ENCODE measurements at regions of chr22 and their contacts with region 1.

Region 1: DNA sequence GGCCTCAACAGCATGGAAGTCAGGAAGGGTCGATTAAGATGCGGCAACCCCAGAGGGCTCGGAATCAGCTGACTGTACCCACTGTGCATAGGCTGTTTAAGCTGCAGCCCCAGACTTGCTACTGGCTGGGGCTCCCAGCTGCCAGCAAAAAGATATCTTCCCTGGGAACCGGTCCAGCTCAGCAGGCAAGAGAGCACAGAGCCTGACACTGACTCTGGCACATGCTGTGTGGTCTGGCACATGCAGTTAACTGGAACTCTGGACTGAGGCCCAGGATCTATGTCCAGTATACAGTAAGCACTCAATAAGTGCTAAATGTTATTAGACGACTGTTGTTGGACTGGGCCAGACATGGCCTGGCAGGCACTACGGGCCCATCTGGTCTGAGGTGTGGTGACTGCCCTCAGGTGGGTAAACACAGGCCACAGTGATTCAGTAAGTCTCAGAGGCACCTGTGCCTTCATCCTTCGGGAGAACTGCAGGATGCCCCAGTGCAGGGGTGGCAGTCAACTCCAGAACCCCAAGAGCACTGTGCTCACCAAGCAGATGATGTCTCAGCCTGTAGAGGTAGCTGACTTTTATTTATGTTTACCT is 87.6 kb downstream of the LARGE1 start:
- DNase-seq: no peak
- ATAC-seq: no peak
- H3K4me3 ChIP-seq: no peak overlapping the region
- H3K27ac ChIP-seq: no peak overlapping the region
- H3K4me1 ChIP-seq: no peaks in the 10 kb centered on the region
- H3K27me3 ChIP-seq: no peaks in the 10 kb centered on the region
- CTCF ChIP-seq: no peak

Region 2: DNA sequence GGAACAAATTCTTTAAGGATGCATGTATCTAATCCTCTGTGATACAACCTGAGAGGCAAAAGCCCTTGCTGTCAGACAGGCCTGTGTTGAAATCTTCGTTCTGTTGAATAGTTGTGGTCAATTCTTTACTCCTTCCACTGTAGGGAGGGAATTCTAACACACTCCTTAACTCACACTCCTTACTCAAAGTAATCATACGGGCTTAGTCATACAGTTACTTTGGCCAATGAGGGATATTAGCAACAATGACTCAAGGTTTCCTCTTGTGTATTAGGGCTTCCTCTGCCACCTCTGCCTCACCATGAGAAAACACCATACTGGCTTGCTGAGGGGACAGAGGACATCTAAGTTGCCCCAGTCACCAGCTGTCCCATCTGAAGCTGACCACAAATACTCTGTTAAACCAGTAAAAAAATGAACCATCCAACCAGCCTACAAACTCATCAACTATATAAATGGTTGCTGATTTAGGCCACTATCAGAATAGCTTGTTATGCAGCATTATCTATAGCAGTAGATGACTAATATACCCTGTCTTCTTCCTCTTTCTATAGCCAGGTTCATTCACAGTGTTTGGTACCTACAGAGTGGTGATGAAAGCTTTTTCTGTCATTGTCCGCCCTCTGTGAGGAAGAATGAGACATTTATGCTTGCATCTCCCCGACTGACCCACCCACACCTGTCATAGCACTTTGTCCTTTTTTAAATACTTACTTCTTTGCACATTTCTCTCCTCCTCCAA is 451.7 kb before region 1 on chr22:
- CTCF ChIA-PET with region 1: no interaction called
- POLR2A ChIA-PET with region 1: no interaction called
- in situ Hi-C with region 1: no loop called
- intact Hi-C with region 1: no loop called
- DNase-seq: no peak
- ATAC-seq: no peak
- H3K4me3 ChIP-seq: no peak overlapping the region
- H3K27ac ChIP-seq: no peak overlapping the region
- H3K4me1 ChIP-seq: no peaks in the 10 kb centered on the region
- H3K27me3 ChIP-seq: no peaks in the 10 kb centered on the region
- CTCF ChIP-seq: no peak

Region 3: GRCh38 chr22:33819743-33820142 is 12.9 kb before region 1 on chr22:
- CTCF ChIA-PET with region 1: no interaction called
- POLR2A ChIA-PET with region 1: no interaction called
- in situ Hi-C with region 1: no loop called
- intact Hi-C with region 1: no loop called
- DNase-seq: no peak
- ATAC-seq: no peak
- H3K4me3 ChIP-seq: no peak overlapping the region
- H3K27ac ChIP-seq: no peak overlapping the region
- H3K4me1 ChIP-seq: no peaks in the 10 kb centered on the region
- H3K27me3 ChIP-seq: no peaks in the 10 kb centered on the region
- CTCF ChIP-seq: no peak

Region 4: DNA sequence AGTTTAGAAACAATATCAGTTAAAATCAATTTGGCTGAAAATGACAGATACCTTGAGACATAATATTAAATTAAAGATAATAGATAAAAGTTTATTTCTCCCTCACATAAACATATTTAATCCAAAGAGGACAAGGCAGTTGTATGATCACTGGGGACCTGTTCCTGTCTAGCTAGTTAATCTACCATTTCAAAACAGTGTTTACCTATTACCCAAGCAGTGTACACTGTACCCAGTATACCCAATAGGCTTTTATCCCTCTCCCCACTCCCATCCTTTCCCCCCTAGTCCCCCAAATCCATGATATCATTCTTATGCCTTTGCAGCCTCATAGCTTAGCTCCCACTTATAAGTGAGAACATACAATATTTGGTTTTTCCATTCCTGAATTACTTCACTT is 317.4 kb after region 1 on chr22:
- CTCF ChIA-PET with region 1: no interaction called
- POLR2A ChIA-PET with region 1: no interaction called
- in situ Hi-C with region 1: no loop called
- intact Hi-C with region 1: no loop called
- DNase-seq: no peak
- ATAC-seq: no peak
- H3K4me3 ChIP-seq: no peak overlapping the region
- H3K27ac ChIP-seq: no peak overlapping the region
- H3K4me1 ChIP-seq: no peaks in the 10 kb centered on the region
- H3K27me3 ChIP-seq: no peaks in the 10 kb centered on the region
- CTCF ChIP-seq: no peak

Region 5: DNA sequence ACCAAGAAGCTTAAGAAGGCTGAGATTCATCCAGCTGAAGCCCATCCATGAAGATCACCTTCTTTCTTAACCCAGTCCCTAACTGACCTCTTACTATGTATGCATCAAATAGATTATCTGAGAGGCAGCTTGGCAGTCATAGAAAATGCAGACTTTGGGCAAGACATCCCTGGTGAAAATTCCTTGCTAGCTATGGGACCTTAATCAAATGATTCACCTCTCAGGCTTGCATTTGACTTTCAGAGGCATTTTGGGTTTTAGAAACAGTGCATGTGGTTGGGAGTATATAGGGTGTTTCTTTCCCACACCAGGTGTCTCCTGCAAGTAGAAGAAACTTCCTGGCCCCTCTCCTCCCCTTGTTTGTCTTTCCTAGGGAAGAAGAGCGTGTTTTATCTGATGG is 1044.9 kb after region 1 on chr22:
- CTCF ChIA-PET with region 1: no interaction called
- POLR2A ChIA-PET with region 1: interaction called, 12 read pairs
- in situ Hi-C with region 1: no loop called
- intact Hi-C with region 1: no loop called
- DNase-seq: no peak
- ATAC-seq: no peak
- H3K4me3 ChIP-seq: no peak overlapping the region
- H3K27ac ChIP-seq: no peak overlapping the region
- H3K4me1 ChIP-seq: no peaks in the 10 kb centered on the region
- H3K27me3 ChIP-seq: no peaks in the 10 kb centered on the region
- CTCF ChIP-seq: no peak

Measured in Panc1 (cell line).